Posterior cingulate gyrus (tissue), 11 donors: ENCODE measurements at regions of chr5 and their contacts with region 1.

Region 1: GRCh38 chr5:14264604-14265316 is 121.6 kb downstream of the TRIO start:
- DNase-seq: peak; percentile 84 to 99 (median 91)

Region 2: DNA sequence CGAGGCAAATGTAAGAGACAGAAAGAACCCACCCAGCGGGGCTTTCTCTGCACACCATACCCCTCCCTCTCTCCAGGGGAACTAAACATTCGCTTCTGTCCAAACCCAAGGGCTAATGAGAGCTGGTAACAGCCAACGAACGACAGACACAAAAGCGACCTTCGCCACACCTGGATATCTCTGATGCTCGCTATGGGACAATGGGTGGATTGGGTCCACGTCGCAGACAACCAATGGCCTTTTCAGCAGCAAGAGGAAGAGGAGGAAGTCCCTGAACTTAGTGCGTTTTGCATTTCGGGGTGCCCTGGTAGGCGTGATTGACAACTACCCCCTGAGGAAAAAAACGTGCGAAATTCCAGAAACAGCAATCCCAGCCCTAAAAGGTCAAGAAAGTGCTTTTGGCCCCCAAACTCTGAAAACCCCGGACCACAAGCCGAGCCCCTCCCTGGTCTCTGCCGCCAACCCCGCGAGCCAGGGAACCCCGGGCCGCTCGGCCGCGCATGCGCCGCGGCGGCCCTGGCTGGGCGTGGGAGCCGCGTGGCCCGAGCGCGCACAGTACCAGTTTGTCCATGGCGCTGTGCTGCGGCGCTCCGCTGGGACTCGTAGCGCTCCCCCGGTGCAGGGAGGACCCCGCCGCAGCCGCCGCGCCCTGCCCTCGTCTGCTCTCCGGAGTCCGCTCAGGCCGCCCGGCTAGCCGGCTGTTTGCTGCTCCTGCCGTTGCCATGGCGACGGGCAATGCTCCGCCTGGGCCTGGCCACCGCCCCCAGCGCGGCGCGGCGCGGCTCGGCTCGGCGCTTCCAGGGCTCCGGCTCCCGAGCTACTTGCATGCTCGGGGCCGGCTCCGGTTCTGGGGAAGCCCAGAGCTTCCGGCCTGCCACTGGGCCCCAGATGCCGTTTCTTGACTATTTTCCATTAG is 253.4 kb before region 1 on chr5:
- intact Hi-C with region 1: loop called (anchors 5 kb)
- DNase-seq: peak; percentile 60 to 97 (median 80)